Activated B cell treated with CpG ODN at 0.5 μM for 24 hours (primary cell): ENCODE measurements at regions of chr14 and their contacts with region 1.

Region 1: DNA sequence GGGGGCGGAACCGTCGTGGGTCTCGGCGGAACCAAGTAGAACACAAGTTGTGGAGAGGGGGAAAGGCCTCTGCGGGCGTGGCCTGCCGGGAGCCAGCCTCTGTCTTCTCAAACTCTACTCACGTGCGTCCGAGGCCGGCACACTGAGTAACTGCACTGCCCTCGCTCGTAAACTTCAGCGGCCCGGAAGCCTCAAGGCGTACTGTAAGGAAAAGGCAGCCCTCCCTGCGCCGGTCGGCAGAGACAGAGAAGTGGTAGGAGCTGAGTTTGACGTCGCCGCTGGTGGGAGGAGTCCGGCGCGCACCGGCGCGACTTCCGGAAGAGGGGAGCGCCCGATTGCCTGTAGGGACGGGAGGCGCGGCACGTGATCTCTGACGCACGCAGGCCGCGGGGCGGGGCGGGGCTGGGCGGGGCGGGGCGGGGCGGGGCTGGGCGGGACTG is at the start of gene FBXO33:
- DNase-seq: peak; percentile 96
- ATAC-seq: peak; percentile 77
- H3K4me3 Mint-ChIP-seq: peak within 1 kb of the TSS; percentile 98
- H3K27ac Mint-ChIP-seq: peak within 1 kb of the TSS; percentile 100
- H3K4me1 Mint-ChIP-seq: peaks cover 41% of the 10 kb centered on the region
- H3K27me3 Mint-ChIP-seq: no peaks in the 10 kb centered on the region
- CTCF ChIP-seq: no peak
- total RNA-seq, gene FBXO33: 12.7 and 14.3 TPM in 2 replicates

Region 2: DNA sequence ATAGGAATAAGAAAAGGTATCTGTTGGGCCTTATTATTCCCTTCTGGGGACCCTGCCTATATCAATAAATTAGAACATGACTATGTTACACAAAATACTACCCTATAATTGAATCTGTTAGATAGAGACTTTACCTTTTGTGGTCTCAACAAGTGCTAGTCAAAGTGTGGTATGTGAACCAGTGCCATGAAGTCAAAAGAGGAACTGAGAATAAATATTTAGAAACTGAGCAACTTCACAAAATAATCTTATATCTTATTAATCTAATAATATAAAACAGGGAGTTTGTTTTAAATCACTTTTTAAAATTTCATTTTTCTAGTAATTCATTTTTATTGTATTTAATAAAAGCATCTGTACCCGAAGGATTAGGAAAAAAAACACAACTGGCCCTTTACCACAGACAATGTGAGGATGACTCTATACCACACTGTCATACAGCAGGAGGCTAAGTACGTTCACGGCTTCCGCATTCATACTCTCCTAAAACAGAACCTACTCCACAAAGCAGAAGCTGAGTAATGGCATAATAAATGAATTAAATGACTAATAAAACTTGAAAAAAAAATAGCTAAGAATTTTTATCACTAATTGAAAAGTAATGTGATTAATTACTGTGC is 371.3 kb before region 1 on chr14:
- CTCF ChIA-PET with region 1: no interaction called
- POLR2A ChIA-PET with region 1: interaction called, 8 read pairs
- intact Hi-C with region 1: loop called (anchors 1 kb)
- DNase-seq: no peak
- ATAC-seq: peak; percentile 98
- H3K4me3 Mint-ChIP-seq: peak overlapping the region; percentile 47
- H3K27ac Mint-ChIP-seq: peak overlapping the region; percentile 85
- H3K4me1 Mint-ChIP-seq: peaks cover 21% of the 10 kb centered on the region
- H3K27me3 Mint-ChIP-seq: no peaks in the 10 kb centered on the region
- CTCF ChIP-seq: no peak

Region 3: DNA sequence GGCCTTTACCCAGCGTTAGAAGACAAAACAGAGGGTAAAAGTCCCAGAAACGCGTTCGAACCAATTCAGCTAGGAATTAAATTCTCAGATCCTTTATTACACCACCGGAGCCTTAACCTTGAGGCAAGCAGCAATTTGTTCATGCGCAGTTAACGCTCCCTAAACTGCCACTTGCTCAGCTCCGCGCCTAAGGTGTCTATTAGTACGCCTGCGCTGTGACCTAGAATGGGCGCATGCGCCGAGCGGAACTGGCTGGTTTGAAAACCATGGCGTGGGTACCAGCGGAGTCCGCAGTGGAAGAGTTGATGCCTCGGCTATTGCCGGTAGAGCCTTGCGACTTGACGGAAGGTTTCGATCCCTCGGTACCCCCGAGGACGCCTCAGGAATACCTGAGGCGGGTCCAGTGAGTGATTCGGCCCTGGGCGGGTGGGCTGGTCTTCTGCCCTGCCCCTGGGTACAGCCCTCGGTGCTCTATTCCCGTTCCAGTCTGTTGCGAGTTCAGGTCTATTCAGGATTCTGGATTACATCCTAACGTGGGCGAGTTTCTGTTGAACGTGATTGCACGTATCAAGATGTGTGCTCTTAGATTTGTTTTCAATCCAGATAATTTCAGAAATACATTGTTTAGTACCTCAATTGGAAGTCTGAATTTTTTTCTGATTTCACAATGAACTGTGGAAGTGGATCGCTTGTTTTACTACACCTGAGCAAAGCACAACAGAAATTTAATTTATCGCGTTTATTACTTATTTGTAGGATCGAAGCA is 317.9 kb before region 1 on chr14 and contains the start of gene GEMIN2:
- CTCF ChIA-PET with region 1: no interaction called
- POLR2A ChIA-PET with region 1: interaction called, 19 read pairs
- intact Hi-C with region 1: loop called (anchors 1 kb)
- DNase-seq: peak; percentile 83
- ATAC-seq: peak; percentile 99
- H3K4me3 Mint-ChIP-seq: peak within 1 kb of the TSS; percentile 98
- H3K27ac Mint-ChIP-seq: peak within 1 kb of the TSS; percentile 95
- H3K4me1 Mint-ChIP-seq: peaks cover 28% of the 10 kb centered on the region
- H3K27me3 Mint-ChIP-seq: no peaks in the 10 kb centered on the region
- CTCF ChIP-seq: no peak
- total RNA-seq, gene GEMIN2: 12.3 and 12.6 TPM in 2 replicates

Region 4: GRCh38 chr14:39169541-39169900 is 262.7 kb before region 1 on chr14:
- CTCF ChIA-PET with region 1: no interaction called
- POLR2A ChIA-PET with region 1: interaction called, 59 read pairs
- intact Hi-C with region 1: loop called (anchors 1 kb)
- DNase-seq: no peak
- ATAC-seq: no peak
- H3K4me3 Mint-ChIP-seq: peak overlapping the region; percentile 98
- H3K27ac Mint-ChIP-seq: peak overlapping the region; percentile 98
- H3K4me1 Mint-ChIP-seq: peaks cover 39% of the 10 kb centered on the region
- H3K27me3 Mint-ChIP-seq: no peaks in the 10 kb centered on the region
- CTCF ChIP-seq: no peak

Region 5: GRCh38 chr14:39174560-39175444 is 257.4 kb before region 1 on chr14 and contains the start of gene PNN:
- CTCF ChIA-PET with region 1: no interaction called
- POLR2A ChIA-PET with region 1: interaction called, 59 read pairs
- intact Hi-C with region 1: loop called (anchors 1 kb)
- DNase-seq: peak; percentile 87
- ATAC-seq: peak; percentile 82
- H3K4me3 Mint-ChIP-seq: peak within 1 kb of the TSS; percentile 99
- H3K27ac Mint-ChIP-seq: peak within 1 kb of the TSS; percentile 99
- H3K4me1 Mint-ChIP-seq: peaks cover 41% of the 10 kb centered on the region
- H3K27me3 Mint-ChIP-seq: no peaks in the 10 kb centered on the region
- CTCF ChIP-seq: no peak
- total RNA-seq, gene PNN: 102 and 109 TPM in 2 replicates

Region 6: GRCh38 chr14:39266871-39267591 is 165.2 kb before region 1 on chr14:
- CTCF ChIA-PET with region 1: interaction called, 3 read pairs
- POLR2A ChIA-PET with region 1: interaction called, 87 read pairs
- intact Hi-C with region 1: loop called (anchors 1 kb)
- DNase-seq: peak; percentile 81
- ATAC-seq: peak; percentile 84
- H3K4me3 Mint-ChIP-seq: peak overlapping the region; percentile 96
- H3K27ac Mint-ChIP-seq: peak overlapping the region; percentile 99
- H3K4me1 Mint-ChIP-seq: peaks cover 53% of the 10 kb centered on the region
- H3K27me3 Mint-ChIP-seq: no peaks in the 10 kb centered on the region
- CTCF ChIP-seq: no peak

Region 7: GRCh38 chr14:39474416-39474911 is 42.3 kb after region 1 on chr14:
- CTCF ChIA-PET with region 1: no interaction called
- POLR2A ChIA-PET with region 1: no interaction called
- intact Hi-C with region 1: no loop called
- DNase-seq: no peak
- ATAC-seq: no peak
- H3K4me3 Mint-ChIP-seq: no peak overlapping the region
- H3K27ac Mint-ChIP-seq: no peak overlapping the region
- H3K4me1 Mint-ChIP-seq: no peaks in the 10 kb centered on the region
- H3K27me3 Mint-ChIP-seq: no peaks in the 10 kb centered on the region
- CTCF ChIP-seq: no peak